ENCODE measurements at regions of chr18 and their contacts with region 1.

Region 1: DNA sequence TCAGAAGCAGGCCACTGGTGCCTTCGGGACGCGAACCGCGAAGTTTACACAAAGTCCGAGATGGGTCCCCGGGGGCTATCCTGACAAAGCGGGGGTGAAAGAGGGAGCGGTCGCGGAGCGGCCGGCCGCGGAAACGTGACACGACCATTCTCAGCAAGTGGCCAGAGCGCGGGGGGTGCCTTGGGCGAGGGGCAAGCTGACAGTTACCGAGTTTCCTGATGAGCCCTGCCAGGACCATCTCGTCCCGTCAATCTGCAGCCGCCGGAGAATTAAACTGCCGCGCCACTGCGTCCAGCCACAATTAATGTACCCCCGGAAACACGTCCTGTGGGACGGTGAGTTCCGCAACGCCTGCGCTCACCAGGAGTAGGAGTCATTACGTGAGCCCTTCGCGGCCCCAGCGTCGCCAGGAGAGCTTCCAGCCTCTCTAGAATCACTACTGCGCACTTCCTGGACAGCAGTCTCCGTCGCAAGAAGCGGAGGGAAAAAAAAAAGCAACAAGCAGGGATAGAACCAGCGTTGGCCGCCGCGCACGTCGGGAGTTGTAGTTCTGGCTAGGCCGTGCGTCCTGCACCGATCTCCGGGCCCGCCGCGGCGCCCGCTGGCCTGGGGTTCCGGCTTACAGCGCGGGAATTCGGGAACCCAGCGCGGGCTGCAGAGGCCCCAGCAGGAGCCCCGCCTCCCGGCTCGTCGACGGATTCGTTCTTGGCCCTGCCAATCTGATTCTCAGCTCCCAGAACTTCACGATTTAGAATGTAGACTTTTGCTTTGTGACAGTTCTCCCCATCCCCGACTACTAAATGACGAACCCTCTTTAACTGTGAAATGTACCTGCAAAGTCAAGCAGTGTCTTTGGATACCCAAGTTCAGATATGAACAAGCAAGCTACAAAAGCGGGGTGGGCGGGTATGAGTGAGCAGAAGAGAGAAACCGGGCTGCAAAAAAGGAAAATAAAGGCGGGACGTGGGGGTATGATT is at the start of gene RTTN:
- DNase-seq: peak; percentile 98
- H3K4me3 Mint-ChIP-seq: peak within 1 kb of the TSS; percentile 89
- H3K27ac Mint-ChIP-seq: peak within 1 kb of the TSS; percentile 99
- H3K4me1 Mint-ChIP-seq: peaks cover 20% of the 10 kb centered on the region
- H3K27me3 Mint-ChIP-seq: peaks cover 4% of the 10 kb centered on the region
- total RNA-seq, gene RTTN: 25.5 and 28.2 TPM in 2 replicates

Region 2: GRCh38 chr18:68714609-68715496 is 1490.9 kb before region 1 on chr18 and contains the start of gene TMX3:
- intact Hi-C with region 1: loop called (anchors 2 kb)
- DNase-seq: peak; percentile 98
- H3K4me3 Mint-ChIP-seq: peak within 1 kb of the TSS; percentile 94
- H3K27ac Mint-ChIP-seq: peak within 1 kb of the TSS; percentile 90
- H3K4me1 Mint-ChIP-seq: peaks cover 30% of the 10 kb centered on the region
- H3K27me3 Mint-ChIP-seq: no peaks in the 10 kb centered on the region
- total RNA-seq, gene TMX3: 65.6 and 67.1 TPM in 2 replicates

Region 3: DNA sequence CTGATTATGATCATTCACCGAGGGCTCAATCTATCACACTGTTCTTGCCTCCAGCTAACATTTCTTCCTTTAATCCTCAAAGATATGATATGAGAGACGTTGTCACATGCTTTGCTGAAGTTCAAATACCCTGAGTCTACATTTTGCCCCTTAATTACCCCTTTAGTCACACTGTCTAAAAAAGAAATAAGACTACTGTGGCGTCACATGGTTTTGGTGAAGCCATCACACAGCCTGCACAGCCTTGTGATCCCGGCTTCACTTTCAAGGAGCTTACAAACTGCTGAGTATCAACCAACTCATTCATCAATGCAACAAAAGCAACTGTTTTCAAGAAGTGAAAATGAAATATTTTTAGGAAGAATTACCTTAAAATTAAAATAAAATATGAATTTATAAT is 51.3 kb after region 1 on chr18:
- intact Hi-C with region 1: no loop called
- DNase-seq: peak; percentile 34
- H3K4me3 Mint-ChIP-seq: no peak overlapping the region
- H3K27ac Mint-ChIP-seq: no peak overlapping the region
- H3K4me1 Mint-ChIP-seq: no peaks in the 10 kb centered on the region
- H3K27me3 Mint-ChIP-seq: peaks cover 8% of the 10 kb centered on the region

Region 4: DNA sequence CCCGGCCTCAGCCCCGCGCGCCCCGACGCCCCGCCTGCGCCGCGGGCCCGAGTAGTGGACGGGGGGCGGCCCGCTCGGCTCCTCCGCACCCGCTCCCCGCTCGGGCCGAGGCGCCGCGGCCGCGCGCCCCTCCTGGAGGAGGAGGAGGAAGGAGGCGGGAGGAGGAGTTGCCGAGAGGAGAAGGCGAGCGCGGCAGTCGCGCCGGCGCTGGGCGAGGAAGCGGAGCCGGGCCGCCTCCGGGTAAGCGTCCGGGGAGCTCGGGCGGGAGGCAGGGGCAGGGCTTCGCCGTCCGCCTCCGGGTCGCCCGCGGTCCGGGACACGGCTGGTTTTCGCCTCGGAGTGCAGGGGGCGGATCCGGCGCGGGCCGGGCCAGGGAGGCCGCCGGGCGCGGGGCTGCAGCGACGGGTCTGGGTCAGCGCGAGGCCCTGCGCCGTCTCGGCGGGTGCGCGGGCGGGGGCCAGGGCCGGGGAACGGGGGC is 83.2 kb after region 1 on chr18 and contains the start of gene SOCS6:
- intact Hi-C with region 1: loop called (anchors 1 kb)
- DNase-seq: peak; percentile 87
- H3K4me3 Mint-ChIP-seq: peak within 1 kb of the TSS; percentile 86
- H3K27ac Mint-ChIP-seq: peak within 1 kb of the TSS; percentile 80
- H3K4me1 Mint-ChIP-seq: peaks cover 10% of the 10 kb centered on the region
- H3K27me3 Mint-ChIP-seq: peaks cover 33% of the 10 kb centered on the region
- total RNA-seq, gene SOCS6: 2.8 and 3.3 TPM in 2 replicates

Measured in activated CD4-positive, alpha-beta T cell treated with anti-CD3 and anti-CD28 coated beads, Interleukin-2, amount 10 ng/mL, durations not matched to agents 24 days and 14 days (primary cell).